B cell (primary cell): ENCODE measurements at regions of chr1 and their contacts with region 1.

Region 1: DNA sequence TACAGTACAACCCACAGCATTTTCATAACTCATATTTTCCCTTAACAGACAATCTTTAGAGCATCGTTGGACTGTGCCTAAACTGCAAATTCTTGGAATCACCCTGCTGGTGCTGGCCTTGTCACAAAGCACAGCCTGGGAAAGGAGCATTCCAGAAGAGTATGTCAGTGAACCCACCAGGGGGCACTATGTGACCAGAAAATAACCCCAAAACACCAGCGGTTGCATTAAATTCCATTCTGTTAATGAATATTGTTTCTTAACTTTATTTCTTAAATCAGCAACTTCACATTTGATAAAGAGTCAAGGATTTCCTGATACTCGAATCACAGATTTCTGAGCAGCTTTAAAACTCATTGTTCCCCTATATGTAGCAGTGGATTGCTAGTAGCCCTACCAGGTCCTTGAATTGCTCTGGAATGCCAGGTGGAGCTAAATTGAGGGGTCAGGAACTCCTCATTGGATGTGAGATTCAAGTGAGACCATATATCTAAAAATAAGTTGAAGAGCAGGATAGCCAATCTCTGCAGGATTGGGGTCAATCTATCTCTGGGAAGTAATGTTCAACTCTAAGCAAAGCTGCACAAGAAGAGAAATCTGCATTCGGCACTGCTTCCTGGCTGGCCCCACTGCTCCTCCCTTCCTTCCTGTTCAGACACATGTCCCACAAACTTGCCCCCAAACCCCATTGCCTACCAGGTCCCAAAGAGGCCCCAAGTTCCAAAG is 12.7 kb upstream of the RAB4A start:
- DNase-seq: peak; percentile 77
- ATAC-seq: peak; percentile 76
- H3K4me3 ChIP-seq: no peak overlapping the region
- H3K4me3 Mint-ChIP-seq: no peak overlapping the region
- H3K27ac ChIP-seq: no peak overlapping the region
- H3K27ac Mint-ChIP-seq: no peak overlapping the region
- H3K4me1 ChIP-seq: peaks cover 10 to 16% of the 10 kb centered on the region in 2 donors
- H3K4me1 Mint-ChIP-seq: peaks cover 13% of the 10 kb centered on the region
- H3K27me3 ChIP-seq: no peaks in the 10 kb centered on the region
- H3K27me3 Mint-ChIP-seq: peaks cover 3% of the 10 kb centered on the region
- CTCF ChIP-seq: peak; percentile 94

Region 2: GRCh38 chr1:228664399-228664914 is 593.7 kb before region 1 on chr1:
- CTCF ChIA-PET with region 1: interaction called, 15 read pairs
- POLR2A ChIA-PET with region 1: no interaction called
- intact Hi-C with region 1: no loop called
- DNase-seq: peak; percentile 79
- ATAC-seq: peak; percentile 43
- H3K4me3 ChIP-seq: no peak overlapping the region
- H3K4me3 Mint-ChIP-seq: no peak overlapping the region
- H3K27ac ChIP-seq: no peak overlapping the region
- H3K27ac Mint-ChIP-seq: no peak overlapping the region
- H3K4me1 ChIP-seq: no peaks in the 10 kb centered on the region
- H3K4me1 Mint-ChIP-seq: no peaks in the 10 kb centered on the region
- H3K27me3 ChIP-seq: peaks cover 0 to 8% (median 2%) of the 10 kb centered on the region in 4 experiments
- H3K27me3 Mint-ChIP-seq: peaks cover 22% of the 10 kb centered on the region
- CTCF ChIP-seq: peak; percentile 95

Region 3: GRCh38 chr1:229270547-229271447 is 12.6 kb after region 1 on chr1 and contains the start of gene RAB4A:
- CTCF ChIA-PET with region 1: interaction called, 15 read pairs
- POLR2A ChIA-PET with region 1: no interaction called
- intact Hi-C with region 1: loop called (anchors 1 kb)
- DNase-seq: peak; percentile 90
- ATAC-seq: peak; percentile 90
- H3K4me3 ChIP-seq: peak within 1 kb of the TSS; percentile 59 to 89 (median 75)
- H3K4me3 Mint-ChIP-seq: peak within 1 kb of the TSS; percentile 96
- H3K27ac ChIP-seq: peak within 1 kb of the TSS; percentile 24 to 49
- H3K27ac Mint-ChIP-seq: peak within 1 kb of the TSS; percentile 85
- H3K4me1 ChIP-seq: peaks cover 16 to 22% of the 10 kb centered on the region in 2 donors
- H3K4me1 Mint-ChIP-seq: peaks cover 30% of the 10 kb centered on the region
- H3K27me3 ChIP-seq: no peaks in the 10 kb centered on the region
- H3K27me3 Mint-ChIP-seq: no peaks in the 10 kb centered on the region
- CTCF ChIP-seq: no peak
- total RNA-seq, gene RAB4A: 46.0 and 49.7 TPM in 2 replicates

Region 4: DNA sequence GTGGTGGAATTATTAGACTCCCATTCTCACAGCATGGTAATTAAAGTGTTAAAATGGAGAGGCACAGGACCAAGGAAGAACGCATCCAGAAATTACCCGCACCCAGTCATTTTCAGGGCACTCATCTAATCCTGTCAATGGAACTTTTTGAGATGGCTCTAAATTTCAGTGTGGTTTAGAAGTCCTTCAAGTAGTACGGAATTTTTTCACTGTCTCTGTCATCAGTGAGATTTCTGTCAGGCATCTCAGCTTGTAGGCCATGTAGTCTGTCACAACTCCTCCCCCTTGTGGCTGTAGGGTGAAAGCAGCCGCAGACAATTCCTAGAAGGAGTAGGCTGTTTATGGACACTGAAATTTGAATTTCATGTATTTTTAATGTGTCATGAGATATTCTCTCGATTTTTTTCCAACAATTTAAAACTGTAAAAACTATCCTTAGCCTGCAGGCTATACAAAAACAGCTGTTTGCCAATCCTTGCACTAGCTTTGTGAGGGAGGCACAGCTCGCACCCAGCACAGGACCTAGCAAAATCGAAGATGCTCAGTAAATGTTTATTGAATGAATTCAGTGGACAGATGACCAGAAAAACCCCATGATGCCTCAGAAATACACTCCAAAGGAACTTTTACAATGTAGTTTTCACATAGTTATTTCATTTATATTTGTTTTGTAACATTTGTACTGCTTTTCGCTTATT is 256.5 kb after region 1 on chr1:
- CTCF ChIA-PET with region 1: interaction called, 101 read pairs
- POLR2A ChIA-PET with region 1: no interaction called
- intact Hi-C with region 1: loop called (anchors 1 kb)
- DNase-seq: peak; percentile 76
- ATAC-seq: peak; percentile 85
- H3K4me3 ChIP-seq: no peak overlapping the region
- H3K4me3 Mint-ChIP-seq: no peak overlapping the region
- H3K27ac ChIP-seq: no peak overlapping the region
- H3K27ac Mint-ChIP-seq: no peak overlapping the region
- H3K4me1 ChIP-seq: peaks cover 0 to 4% of the 10 kb centered on the region in 2 donors
- H3K4me1 Mint-ChIP-seq: peaks cover 2% of the 10 kb centered on the region
- H3K27me3 ChIP-seq: no peaks in the 10 kb centered on the region
- H3K27me3 Mint-ChIP-seq: no peaks in the 10 kb centered on the region
- CTCF ChIP-seq: peak; percentile 84